PC-9 (cell line): ENCODE measurements at regions of chr14 and their contacts with region 1.

Region 1: DNA sequence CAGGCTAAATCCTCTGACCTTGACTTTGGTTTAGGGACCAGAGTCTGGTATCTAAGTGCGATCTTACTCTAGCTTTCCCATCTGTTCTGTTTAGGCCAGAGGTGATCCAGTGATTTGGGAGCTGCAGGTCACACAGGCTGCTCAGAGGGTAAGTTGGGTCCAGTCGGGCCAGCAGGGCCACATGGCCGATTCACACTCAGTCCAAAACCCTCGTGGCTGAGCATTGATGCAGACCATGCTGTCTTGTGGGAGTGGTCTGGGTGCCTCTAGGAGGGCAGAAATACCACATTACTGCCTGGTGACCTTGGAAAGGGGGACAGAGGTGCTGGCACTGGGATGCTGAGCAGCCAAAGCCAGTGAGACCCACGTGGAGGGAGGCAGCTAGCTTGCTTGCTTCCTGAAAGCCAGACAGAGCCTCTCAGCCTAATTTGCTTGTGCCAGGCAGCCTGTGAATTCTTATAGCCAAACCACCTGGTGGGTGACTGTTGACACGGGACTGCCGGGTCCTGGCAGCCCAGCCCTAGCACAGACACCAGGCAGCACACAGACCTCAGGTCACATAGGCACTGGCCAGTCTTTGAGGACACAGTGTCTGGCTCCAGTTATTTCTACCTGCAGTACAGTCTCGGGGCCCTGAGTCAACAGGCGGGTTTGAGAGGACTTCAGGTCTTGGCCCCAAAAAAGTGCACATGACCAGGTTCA is 31.7 kb downstream of the ESRRB start:
- DNase-seq: no peak
- H3K4me3 ChIP-seq: no peak overlapping the region
- H3K27ac ChIP-seq: no peak overlapping the region
- H3K4me1 ChIP-seq: no peaks in the 10 kb centered on the region
- H3K27me3 ChIP-seq: peaks cover 98% of the 10 kb centered on the region
- CTCF ChIP-seq: no peak

Region 2: GRCh38 chr14:75141967-75142366 is 1265.6 kb before region 1 on chr14:
- CTCF ChIA-PET with region 1: no interaction called
- POLR2A ChIA-PET with region 1: interaction called, 20 read pairs
- intact Hi-C with region 1: no loop called
- DNase-seq: peak in 1 of 2 experiments; percentile 28
- H3K4me3 ChIP-seq: no peak overlapping the region
- H3K27ac ChIP-seq: peak overlapping the region; percentile 7; the same call in 1 of the 2 replicates
- H3K4me1 ChIP-seq: no peaks in the 10 kb centered on the region
- H3K27me3 ChIP-seq: no peaks in the 10 kb centered on the region
- CTCF ChIP-seq: peak; percentile 61